Activated naive CD8-positive, alpha-beta T cell treated with anti-CD3 and anti-CD28 coated beads, Interleukin-2, amount 10 ng/mL, durations not matched to agents 7 days and 5 days (primary cell): ENCODE measurements at regions of chr7 and their contacts with region 1.

Region 1: DNA sequence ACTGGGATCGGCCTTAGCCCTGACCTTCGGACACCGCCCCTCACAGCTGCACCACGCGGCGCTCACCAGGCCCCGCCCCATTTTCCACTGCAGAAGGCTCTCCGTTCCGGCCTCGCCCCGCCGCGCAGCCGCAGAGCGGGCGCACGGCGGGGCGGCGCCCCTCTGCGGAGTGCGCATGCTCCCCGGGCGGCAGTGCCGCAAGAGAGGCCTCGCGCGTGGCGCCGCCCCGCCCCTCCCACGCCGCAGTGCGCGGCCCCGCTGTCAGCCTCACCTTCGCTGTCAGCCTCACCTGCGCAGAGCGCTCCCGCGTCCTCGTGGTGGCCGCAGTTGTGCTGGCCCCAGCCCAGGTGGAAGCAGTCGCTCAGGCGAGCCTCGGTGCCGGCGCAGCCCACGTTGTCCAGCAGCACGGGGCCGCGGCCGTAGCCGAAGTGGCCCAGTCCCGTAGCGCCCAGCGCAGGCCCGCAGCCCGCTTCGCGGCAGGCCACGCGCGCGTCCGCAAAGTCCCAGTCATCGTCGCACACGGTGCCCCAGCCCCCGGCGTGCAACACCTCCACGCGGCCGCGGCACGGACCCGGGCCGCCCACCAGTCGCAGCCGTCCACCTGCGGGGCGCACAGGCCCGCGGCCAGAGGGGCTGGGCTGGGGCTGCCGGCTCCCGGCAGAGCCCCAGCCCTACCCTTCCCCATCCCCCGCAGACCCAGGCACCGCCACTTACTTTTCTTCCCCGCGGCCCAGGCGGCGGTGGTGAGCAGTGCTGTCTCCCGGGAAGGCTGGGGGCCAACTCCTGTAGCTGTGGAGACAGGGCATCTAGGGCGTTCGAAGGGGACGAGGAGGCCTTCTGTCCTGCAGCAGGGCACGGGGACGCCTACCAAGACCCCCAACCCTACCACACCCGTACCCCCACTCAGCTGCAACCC is 16.1 kb downstream of the SSC4D start:
- DNase-seq: peak; percentile 97
- ATAC-seq: peak; percentile 86
- H3K4me3 Mint-ChIP-seq: peak overlapping the region; percentile 87
- H3K27ac Mint-ChIP-seq: peak overlapping the region; percentile 98
- H3K4me1 Mint-ChIP-seq: peaks cover 15% of the 10 kb centered on the region
- H3K27me3 Mint-ChIP-seq: no peaks in the 10 kb centered on the region

Region 2: DNA sequence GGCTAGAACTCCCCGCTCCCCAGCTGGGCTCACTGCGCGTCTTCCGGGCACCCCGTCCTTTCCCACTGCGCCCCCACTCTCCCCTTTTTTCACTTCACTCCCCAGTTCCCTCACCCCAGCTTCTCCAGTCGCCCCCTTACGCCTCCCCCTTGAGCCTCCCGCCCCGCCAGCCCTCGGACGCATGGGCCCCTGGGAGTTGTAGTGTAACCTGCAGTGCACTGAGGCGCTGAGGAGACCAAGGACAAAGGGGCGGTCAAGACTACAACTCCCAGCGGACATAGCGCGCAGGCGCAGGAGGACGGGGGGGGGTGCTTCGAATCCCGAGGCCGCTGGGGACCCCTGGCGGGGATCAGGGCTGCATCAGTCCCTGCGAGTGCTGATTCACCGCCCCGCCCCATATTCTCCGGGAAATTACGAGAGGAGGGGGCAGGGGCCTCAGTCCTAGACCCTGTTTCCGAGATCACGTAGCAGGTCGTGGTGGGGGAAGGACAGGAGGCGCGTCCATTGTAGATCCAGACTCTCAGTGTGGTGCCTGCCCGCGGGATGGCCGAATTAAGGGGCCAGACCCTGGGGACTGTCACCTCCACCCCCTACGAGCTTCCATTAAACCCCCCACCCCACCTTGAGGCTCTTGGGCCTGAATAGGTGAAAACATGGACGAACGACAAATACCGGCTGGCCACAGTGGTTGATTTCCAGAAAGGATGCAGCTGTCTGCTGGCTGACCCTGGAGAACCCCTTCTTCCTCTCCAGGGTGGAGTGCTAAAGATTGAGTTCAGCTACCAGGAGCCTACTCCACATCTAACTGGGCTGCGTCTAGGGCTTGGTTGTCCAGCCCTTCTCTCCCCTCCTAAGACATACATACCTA is 34.0 kb before region 1 on chr7:
- POLR2A ChIA-PET with region 1: interaction called, 10 read pairs
- DNase-seq: peak; percentile 92
- ATAC-seq: peak; percentile 95
- H3K4me3 Mint-ChIP-seq: peak overlapping the region; percentile 92
- H3K27ac Mint-ChIP-seq: peak overlapping the region; percentile 99
- H3K4me1 Mint-ChIP-seq: peaks cover 37% of the 10 kb centered on the region
- H3K27me3 Mint-ChIP-seq: peaks cover 4% of the 10 kb centered on the region

Region 3: DNA sequence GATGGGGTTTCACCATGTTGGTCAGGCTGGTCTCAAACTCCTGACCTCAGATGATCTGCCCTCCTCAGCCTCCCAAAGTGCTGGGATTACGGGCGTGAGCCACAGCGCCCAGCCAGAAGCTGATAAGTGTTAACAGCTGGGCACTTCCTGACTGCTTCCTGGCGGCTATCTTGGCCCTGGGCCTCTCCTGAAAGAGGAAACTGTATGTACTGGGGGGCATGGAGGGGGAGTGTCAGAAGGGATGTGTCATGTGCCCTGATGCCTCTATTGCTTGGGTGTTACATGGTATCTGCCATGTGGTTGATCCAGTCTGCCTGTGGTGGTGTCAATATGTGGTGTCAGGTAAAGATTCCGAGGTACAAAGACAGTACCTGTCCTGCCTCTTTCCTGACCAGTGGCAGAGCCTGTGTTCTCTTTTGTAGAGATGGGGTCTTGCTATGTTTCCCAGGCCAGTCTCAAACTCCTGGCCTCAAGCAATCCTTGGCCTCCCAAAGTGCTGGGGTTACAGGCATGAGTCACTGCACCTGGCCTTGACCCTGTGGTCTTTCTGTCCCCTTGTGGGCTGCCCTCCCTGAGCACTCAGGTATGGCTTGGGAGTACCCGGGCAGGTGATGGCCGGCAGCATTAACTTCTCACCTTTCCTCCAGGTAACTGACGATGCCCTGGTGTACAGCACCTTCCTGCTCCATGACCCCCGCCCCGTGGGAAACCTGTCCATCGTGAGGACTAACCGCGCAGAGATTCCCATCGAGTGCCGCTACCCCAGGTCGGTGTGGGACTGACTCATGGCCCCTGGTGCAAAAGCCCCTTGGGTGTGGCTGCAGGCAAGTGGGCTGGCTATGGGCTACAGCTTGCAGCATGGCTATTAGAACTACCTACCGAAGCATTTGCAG is 35.7 kb after region 1 on chr7:
- POLR2A ChIA-PET with region 1: no interaction called
- DNase-seq: no peak
- ATAC-seq: no peak
- H3K4me3 Mint-ChIP-seq: no peak overlapping the region
- H3K27ac Mint-ChIP-seq: no peak overlapping the region
- H3K4me1 Mint-ChIP-seq: peaks cover 1% of the 10 kb centered on the region
- H3K27me3 Mint-ChIP-seq: no peaks in the 10 kb centered on the region